ENCODE measurements at regions of chr3 and their contacts with region 1.

Region 1: GRCh38 chr3:52270252-52270754 is 8.1 kb downstream of the WDR82 start:
- DNase-seq: no peak
- H3K4me3 ChIP-seq: peak overlapping the region in 1 of 4 donors; percentile 18
- H3K27ac ChIP-seq: peak overlapping the region; percentile 46 to 71 (median 64)
- H3K4me1 ChIP-seq: peaks cover 9 to 90% (median 62%) of the 10 kb centered on the region in 3 donors
- H3K27me3 ChIP-seq: no peaks in the 10 kb centered on the region
- CTCF ChIP-seq: no peak
- POLR2A ChIP-seq: no peak

Region 2: DNA sequence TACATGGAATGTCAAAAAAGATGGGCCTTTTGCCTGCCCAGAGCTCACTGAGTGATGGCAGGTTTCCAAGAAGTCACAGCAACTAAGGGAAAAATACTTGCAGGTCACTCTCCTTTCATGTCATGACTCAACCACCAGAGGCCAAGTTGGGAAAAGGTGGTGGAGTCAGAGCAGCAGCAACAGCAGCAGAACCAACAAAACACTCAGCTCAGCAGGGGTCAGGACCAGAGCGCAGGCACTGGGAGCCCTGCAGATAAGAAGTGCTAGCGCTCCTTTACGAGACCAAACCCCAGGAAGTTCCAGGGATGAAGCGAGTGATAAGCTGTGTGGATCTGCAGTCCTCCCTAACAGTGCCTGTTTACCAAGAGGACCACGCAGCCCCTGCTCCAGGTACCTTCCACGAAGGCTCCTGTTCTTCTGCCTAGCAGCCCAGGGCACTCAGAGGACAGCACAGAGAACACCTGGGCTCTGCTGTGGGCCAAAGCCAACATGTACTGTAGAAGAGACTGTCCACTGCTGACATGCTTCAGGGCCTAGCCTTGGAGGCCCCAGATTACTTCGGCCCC is 142.1 kb before region 1 on chr3:
- intact Hi-C with region 1: no loop called
- DNase-seq: no peak
- H3K4me3 ChIP-seq: no peak overlapping the region
- H3K27ac ChIP-seq: no peak overlapping the region
- H3K4me1 ChIP-seq: peaks cover 0 to 33% (median under 1%) of the 10 kb centered on the region in 3 donors
- H3K27me3 ChIP-seq: no peaks in the 10 kb centered on the region
- CTCF ChIP-seq: no peak
- POLR2A ChIP-seq: no peak

Region 3: DNA sequence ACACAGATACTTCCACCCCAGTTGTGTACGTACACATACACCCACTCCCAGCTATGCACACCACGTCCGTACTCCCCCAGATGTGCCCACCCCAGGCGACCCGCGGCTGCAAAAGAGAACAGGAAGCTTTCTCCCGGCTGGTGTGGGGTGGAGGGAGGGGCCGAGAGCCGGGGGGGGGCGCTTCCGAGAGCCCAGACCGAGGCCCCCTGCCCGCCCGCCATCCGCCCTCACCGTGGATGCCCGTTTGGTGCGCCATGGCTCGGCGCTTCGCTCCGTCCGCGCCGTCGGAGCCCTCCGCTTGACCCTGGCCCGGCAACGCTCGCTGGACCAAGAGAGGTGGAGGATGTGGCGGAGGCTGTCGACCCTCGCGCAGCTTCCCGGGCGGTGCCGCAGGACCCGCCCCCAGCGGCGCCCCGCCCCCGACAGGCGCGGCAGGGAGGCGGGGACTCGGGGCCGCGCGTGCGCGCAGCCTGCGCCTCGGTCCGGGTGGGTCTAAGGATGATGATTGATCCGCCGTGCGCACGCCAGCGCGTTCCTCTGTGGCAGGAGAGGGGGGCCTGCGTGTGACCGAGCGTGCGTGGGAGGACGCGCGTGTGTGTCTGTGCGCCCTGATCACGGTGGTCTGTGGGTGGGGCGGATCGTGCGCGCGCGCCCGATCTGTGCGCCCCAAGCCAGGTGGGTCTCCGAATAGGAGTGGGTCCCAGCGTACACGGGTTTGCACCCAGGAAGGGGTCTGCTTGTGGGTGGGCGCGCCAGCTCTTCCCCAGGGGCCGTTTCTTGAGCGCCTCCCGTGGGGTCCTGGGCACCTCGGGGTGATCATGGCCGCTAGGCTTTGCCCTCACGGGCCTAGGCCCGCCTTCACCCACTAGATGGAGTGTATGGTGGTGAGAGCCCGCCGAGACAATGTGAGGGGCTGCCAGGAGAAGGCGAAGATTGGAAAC is 31.3 kb before region 1 on chr3 and contains the start of gene TWF2:
- intact Hi-C with region 1: loop called (anchors 5 kb)
- DNase-seq: no peak
- H3K4me3 ChIP-seq: peak within 1 kb of the TSS; percentile 84 to 94 (median 93)
- H3K27ac ChIP-seq: peak within 1 kb of the TSS; percentile 95 to 97 (median 96)
- H3K4me1 ChIP-seq: peaks cover 37 to 71% (median 39%) of the 10 kb centered on the region in 3 donors
- H3K27me3 ChIP-seq: no peaks in the 10 kb centered on the region
- CTCF ChIP-seq: peak in 5 of 6 experiments; percentile 26 to 59 (median 52)
- POLR2A ChIP-seq: peak in 3 of 4 donors; percentile 67 to 90 (median 68)
- total RNA-seq, gene TWF2: 31.6 to 74.9 (median 55.7) TPM

Measured in esophagus squamous epithelium (tissue), 5 donors.